Activated B cell treated with CpG ODN at 0.5 μM for 24 hours (primary cell): ENCODE measurements at regions of chr11 and their contacts with region 1.

Region 1: DNA sequence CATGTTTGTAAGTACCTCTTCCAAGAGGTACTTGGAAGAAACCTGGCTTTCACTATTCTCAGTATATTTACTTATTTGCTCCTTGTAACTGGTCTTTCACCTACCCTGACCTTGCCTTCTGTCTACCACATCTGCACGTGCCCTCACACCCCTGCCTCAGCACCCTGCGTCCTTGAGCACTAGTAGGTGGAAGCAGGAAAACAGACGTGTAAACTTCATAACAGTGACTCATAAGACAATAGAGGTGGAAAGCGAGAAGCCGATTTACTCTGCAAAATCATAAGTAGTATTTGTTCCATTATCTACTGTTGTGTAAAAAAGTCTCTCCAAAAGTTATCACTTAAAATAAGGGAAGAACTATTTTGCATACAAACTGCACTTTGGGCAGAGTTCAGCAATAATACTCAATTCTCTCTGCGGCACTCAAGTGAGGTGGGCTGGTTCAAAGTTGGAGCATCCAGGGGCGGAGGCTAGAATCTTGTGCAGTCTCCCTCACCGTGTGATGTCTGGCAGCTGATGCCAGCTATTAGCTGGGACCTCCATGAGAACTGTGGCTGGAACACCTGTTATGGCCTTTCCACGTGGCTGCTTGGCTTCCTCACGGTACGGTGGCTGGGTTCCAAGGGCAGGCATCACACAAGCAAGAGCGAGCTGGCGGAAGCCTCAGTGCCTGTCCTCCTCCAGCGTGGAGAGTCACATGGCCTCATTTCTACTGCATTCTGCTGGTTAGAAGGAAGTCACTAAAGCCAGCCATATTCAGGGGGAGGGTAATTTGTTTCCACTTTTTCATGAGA is 30.4 kb downstream of the PACS1 start:
- DNase-seq: peak; percentile 41
- ATAC-seq: peak; percentile 89
- H3K4me3 Mint-ChIP-seq: peak overlapping the region; percentile 70
- H3K27ac Mint-ChIP-seq: peak overlapping the region; percentile 88
- H3K4me1 Mint-ChIP-seq: peaks cover 62% of the 10 kb centered on the region
- H3K27me3 Mint-ChIP-seq: no peaks in the 10 kb centered on the region
- CTCF ChIP-seq: no peak

Region 2: GRCh38 chr11:66081505-66081904 is 19.0 kb before region 1 on chr11:
- CTCF ChIA-PET with region 1: no interaction called
- POLR2A ChIA-PET with region 1: interaction called, 11 read pairs
- intact Hi-C with region 1: loop called (anchors 1 kb)
- DNase-seq: peak; percentile 50
- ATAC-seq: peak; percentile 90
- H3K4me3 Mint-ChIP-seq: peak overlapping the region; percentile 80
- H3K27ac Mint-ChIP-seq: peak overlapping the region; percentile 98
- H3K4me1 Mint-ChIP-seq: peaks cover 94% of the 10 kb centered on the region
- H3K27me3 Mint-ChIP-seq: no peaks in the 10 kb centered on the region
- CTCF ChIP-seq: no peak

Region 3: GRCh38 chr11:66112601-66113098 is 12.2 kb after region 1 on chr11:
- CTCF ChIA-PET with region 1: interaction called, 3 read pairs
- POLR2A ChIA-PET with region 1: interaction called, 6 read pairs
- intact Hi-C with region 1: loop called (anchors 1 kb)
- DNase-seq: no peak
- ATAC-seq: peak; percentile 53
- H3K4me3 Mint-ChIP-seq: peak overlapping the region; percentile 58
- H3K27ac Mint-ChIP-seq: peak overlapping the region; percentile 83
- H3K4me1 Mint-ChIP-seq: peaks cover 96% of the 10 kb centered on the region
- H3K27me3 Mint-ChIP-seq: no peaks in the 10 kb centered on the region
- CTCF ChIP-seq: no peak

Region 4: GRCh38 chr11:66195867-66196266 is 95.4 kb after region 1 on chr11:
- CTCF ChIA-PET with region 1: no interaction called
- POLR2A ChIA-PET with region 1: interaction called, 10 read pairs
- intact Hi-C with region 1: no loop called
- DNase-seq: no peak
- ATAC-seq: no peak
- H3K4me3 Mint-ChIP-seq: no peak overlapping the region
- H3K27ac Mint-ChIP-seq: no peak overlapping the region
- H3K4me1 Mint-ChIP-seq: peaks cover 5% of the 10 kb centered on the region
- H3K27me3 Mint-ChIP-seq: no peaks in the 10 kb centered on the region
- CTCF ChIP-seq: no peak